Sigmoid colon (tissue), 7 donors: ENCODE measurements at regions of chr5 and their contacts with region 1.

Region 1: DNA sequence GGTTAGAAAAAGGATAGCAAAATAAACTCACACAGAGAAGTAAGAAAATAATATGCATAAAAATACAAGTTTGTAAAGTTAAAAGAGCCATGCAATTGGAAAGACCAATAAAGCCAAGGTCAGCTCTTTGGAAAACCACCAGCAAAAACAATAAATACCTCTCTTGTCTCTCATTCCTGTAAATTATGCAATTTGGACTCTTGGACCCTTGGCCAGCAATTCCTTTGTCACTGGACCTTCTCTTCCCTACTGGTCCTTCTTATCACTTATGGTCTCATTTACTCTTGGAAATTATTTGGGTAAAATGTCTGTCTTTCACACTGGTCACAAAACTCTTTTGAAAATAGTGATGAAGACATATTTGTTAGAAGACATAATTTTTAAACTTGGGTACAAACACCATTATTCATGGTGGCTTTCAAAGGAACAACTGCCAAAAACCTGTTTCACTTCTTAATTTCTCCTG is 379.5 kb downstream of the TMEM232 start:
- DNase-seq: no peak
- H3K4me3 ChIP-seq: no peak overlapping the region
- H3K27ac ChIP-seq: no peak overlapping the region
- H3K4me1 ChIP-seq: peaks cover 0 to 12% (median 4%) of the 10 kb centered on the region in 4 donors
- H3K27me3 ChIP-seq: no peaks in the 10 kb centered on the region
- CTCF ChIP-seq: no peak
- EP300 ChIP-seq: no peak
- POLR2A ChIP-seq: no peak

Region 2: DNA sequence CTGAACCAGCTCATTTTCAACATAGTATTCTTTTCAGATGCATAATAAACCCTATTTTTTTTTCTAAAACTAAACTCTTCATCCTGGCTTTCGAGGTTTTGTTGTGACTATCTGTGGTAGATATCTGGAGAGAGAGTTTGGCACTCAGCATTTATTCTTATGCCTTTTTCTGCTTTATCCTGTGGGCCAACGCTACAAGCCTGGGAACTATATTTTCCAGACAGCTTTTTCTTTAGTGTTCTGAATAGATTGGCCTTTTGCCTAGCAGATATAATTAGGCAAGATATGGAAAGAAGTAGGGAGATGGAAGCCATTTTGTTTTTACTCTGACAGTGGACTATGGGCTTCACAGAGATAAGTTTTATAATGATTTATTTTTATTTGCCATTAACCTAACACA is 107.1 kb before region 1 on chr5:
- intact Hi-C with region 1: no loop called
- DNase-seq: no peak
- H3K4me3 ChIP-seq: no peak overlapping the region
- H3K27ac ChIP-seq: no peak overlapping the region
- H3K4me1 ChIP-seq: no peaks in the 10 kb centered on the region
- H3K27me3 ChIP-seq: no peaks in the 10 kb centered on the region
- CTCF ChIP-seq: no peak
- EP300 ChIP-seq: no peak
- POLR2A ChIP-seq: no peak

Region 3: GRCh38 chr5:110262749-110263148 is 84.2 kb before region 1 on chr5:
- intact Hi-C with region 1: loop called (anchors 5 kb)
- DNase-seq: no peak
- H3K4me3 ChIP-seq: no peak overlapping the region
- H3K27ac ChIP-seq: peak overlapping the region in 1 of 4 donors; percentile 21
- H3K4me1 ChIP-seq: peaks cover 0 to 44% (median 40%) of the 10 kb centered on the region in 4 donors
- H3K27me3 ChIP-seq: no peaks in the 10 kb centered on the region
- CTCF ChIP-seq: no peak
- EP300 ChIP-seq: no peak
- POLR2A ChIP-seq: no peak